Heart left ventricle (tissue), 16 donors: ENCODE measurements at regions of chr18 and their contacts with region 1.

Region 1: DNA sequence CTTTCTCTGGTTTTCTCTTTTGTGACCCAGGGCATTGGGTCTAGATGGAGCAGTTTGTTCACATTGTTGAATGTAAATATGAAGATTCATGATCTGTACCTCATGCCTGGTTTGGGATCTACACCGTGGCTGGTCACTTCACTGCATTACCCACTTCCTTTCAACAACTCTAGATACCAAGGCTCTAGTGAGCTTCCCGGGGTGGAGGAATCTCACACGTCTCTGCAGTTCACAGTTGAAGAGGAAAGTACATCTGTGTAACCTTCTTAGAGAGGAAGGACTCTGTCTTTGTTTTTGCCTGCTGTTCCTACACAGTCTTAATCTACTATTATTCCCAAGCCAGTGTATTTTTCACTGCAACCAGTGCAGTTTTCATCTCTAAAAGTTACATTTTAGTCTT is 574.8 kb downstream of the MBD2 start:
- DNase-seq: no peak
- ATAC-seq: no peak
- H3K4me3 ChIP-seq: no peak overlapping the region
- H3K27ac ChIP-seq: no peak overlapping the region
- H3K4me1 ChIP-seq: peaks cover 0 to 7% (median 0%) of the 10 kb centered on the region in 12 donors
- H3K27me3 ChIP-seq: no peaks in the 10 kb centered on the region
- CTCF ChIP-seq: no peak
- POLR2A ChIP-seq: no peak

Region 2: DNA sequence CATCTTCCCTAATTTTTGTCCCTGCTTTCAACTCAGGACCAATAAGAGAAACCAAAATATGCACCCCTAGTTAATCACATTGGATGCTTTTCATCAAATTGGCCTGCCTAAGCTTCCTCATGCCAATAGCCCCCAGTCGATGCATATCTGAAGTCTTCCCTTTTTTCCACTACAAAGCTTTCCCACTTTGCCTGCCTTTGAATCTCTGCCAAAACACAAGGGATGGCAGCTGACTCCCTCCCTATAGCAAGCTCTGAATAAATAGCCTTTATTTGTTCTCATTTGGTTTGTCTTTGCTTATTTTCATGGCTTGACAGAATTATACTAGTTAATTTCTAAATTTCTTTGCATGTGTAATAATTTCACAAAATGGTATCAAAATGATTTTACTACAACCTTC is 46.3 kb before region 1 on chr18:
- intact Hi-C with region 1: loop called in 1 of 10 experiments (anchors 10 kb)
- DNase-seq: no peak
- ATAC-seq: no peak
- H3K4me3 ChIP-seq: no peak overlapping the region
- H3K27ac ChIP-seq: no peak overlapping the region
- H3K4me1 ChIP-seq: no peaks in the 10 kb centered on the region
- H3K27me3 ChIP-seq: no peaks in the 10 kb centered on the region
- CTCF ChIP-seq: no peak
- POLR2A ChIP-seq: no peak